ENCODE measurements at regions of chr11 and their contacts with region 1.

Region 1: DNA sequence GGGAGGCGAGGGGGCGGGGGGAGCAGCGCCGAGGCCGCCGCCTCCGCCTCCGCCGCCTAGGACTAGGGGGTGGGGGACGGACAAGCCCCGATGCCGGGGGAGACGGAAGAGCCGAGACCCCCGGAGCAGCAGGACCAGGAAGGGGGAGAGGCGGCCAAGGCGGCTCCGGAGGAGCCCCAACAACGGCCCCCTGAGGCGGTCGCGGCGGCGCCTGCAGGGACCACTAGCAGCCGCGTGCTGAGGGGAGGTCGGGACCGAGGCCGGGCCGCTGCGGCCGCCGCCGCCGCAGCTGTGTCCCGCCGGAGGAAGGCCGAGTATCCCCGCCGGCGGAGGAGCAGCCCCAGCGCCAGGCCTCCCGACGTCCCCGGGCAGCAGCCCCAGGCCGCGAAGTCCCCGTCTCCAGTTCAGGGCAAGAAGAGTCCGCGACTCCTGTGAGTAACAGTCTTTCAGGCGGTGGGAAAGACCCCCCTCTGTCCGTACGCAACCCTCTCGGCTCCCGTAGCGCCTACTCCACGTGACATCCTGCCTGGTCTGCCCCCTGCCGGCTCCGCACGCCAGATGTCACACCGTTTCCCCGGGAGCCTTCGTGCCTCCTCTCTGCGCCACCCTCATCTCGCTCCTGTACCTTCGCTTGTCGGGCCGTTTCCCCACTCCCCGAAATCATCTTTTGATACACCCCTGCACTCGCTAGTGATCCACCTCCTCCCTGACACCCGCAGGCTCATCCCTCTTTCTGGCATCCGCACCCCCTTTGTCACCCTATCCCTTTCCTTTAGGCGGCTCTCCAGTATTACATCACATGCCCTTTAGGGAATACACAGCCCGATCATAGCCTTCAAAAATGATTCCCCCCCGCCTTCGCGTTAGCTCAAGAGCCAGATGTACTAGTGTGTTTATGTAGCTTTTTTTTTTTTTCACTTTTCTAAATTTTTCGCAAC is 598 bp downstream of the ZFP91 start:
- DNase-seq: peak; percentile 85
- H3K4me3 Mint-ChIP-seq: peak overlapping the region; percentile 94
- H3K27ac Mint-ChIP-seq: peak overlapping the region; percentile 100
- H3K4me1 Mint-ChIP-seq: peaks cover 73% of the 10 kb centered on the region
- H3K27me3 Mint-ChIP-seq: no peaks in the 10 kb centered on the region

Region 2: GRCh38 chr11:57530596-57531507 is 1048.6 kb before region 1 on chr11 and contains the start of gene TIMM10:
- intact Hi-C with region 1: loop called (anchors 1 kb)
- DNase-seq: peak; percentile 92
- H3K4me3 Mint-ChIP-seq: peak within 1 kb of the TSS; percentile 87
- H3K27ac Mint-ChIP-seq: peak within 1 kb of the TSS; percentile 87
- H3K4me1 Mint-ChIP-seq: peaks cover 32% of the 10 kb centered on the region
- H3K27me3 Mint-ChIP-seq: no peaks in the 10 kb centered on the region
- total RNA-seq, gene TIMM10: 98.2 and 99.6 TPM in 2 replicates

Region 3: GRCh38 chr11:57712256-57713150 is 867.0 kb before region 1 on chr11 and contains the start of gene TMX2:
- intact Hi-C with region 1: loop called (anchors 1 kb)
- DNase-seq: peak; percentile 88
- H3K4me3 Mint-ChIP-seq: peak within 1 kb of the TSS; percentile 97
- H3K27ac Mint-ChIP-seq: peak within 1 kb of the TSS; percentile 94
- H3K4me1 Mint-ChIP-seq: peaks cover 53% of the 10 kb centered on the region
- H3K27me3 Mint-ChIP-seq: no peaks in the 10 kb centered on the region
- total RNA-seq, gene TMX2: 95.9 and 96.8 TPM in 2 replicates

Region 4: GRCh38 chr11:58592760-58593472 is 13.5 kb after region 1 on chr11:
- intact Hi-C with region 1: loop called (anchors 1 kb)
- DNase-seq: no peak
- H3K4me3 Mint-ChIP-seq: no peak overlapping the region
- H3K27ac Mint-ChIP-seq: peak overlapping the region; percentile 64
- H3K4me1 Mint-ChIP-seq: peaks cover 63% of the 10 kb centered on the region
- H3K27me3 Mint-ChIP-seq: no peaks in the 10 kb centered on the region

Region 5: GRCh38 chr11:59142530-59143507 is 563.4 kb after region 1 on chr11 and contains the start of gene FAM111A:
- intact Hi-C with region 1: loop called (anchors 2 kb)
- DNase-seq: peak; percentile 88
- H3K4me3 Mint-ChIP-seq: peak within 1 kb of the TSS; percentile 91
- H3K27ac Mint-ChIP-seq: peak within 1 kb of the TSS; percentile 93
- H3K4me1 Mint-ChIP-seq: peaks cover 62% of the 10 kb centered on the region
- H3K27me3 Mint-ChIP-seq: no peaks in the 10 kb centered on the region
- total RNA-seq, gene FAM111A: 64.8 and 66.4 TPM in 2 replicates

Region 6: GRCh38 chr11:59753650-59754493 is 1174.4 kb after region 1 on chr11:
- intact Hi-C with region 1: loop called (anchors 10 kb)
- DNase-seq: peak; percentile 77
- H3K4me3 Mint-ChIP-seq: peak overlapping the region; percentile 95
- H3K27ac Mint-ChIP-seq: peak overlapping the region; percentile 82
- H3K4me1 Mint-ChIP-seq: peaks cover 36% of the 10 kb centered on the region
- H3K27me3 Mint-ChIP-seq: peaks cover 7% of the 10 kb centered on the region

Measured in activated T-helper 1 cell treated with anti-CD3 and anti-CD28 coated beads, Interleukin-12 subunit alpha, Interleukin-12 subunit beta, Interleukin-2, Interleukin-4 antibody, amounts not matched to agents 30 ng/mL and 10 ng/mL and 1 ng/mL, durations not matched to agents 14 hours and 24 hours and 36 hours (primary cell).